HEK293 (cell line): ENCODE measurements at regions of chr16 and their contacts with region 1.

Region 1: DNA sequence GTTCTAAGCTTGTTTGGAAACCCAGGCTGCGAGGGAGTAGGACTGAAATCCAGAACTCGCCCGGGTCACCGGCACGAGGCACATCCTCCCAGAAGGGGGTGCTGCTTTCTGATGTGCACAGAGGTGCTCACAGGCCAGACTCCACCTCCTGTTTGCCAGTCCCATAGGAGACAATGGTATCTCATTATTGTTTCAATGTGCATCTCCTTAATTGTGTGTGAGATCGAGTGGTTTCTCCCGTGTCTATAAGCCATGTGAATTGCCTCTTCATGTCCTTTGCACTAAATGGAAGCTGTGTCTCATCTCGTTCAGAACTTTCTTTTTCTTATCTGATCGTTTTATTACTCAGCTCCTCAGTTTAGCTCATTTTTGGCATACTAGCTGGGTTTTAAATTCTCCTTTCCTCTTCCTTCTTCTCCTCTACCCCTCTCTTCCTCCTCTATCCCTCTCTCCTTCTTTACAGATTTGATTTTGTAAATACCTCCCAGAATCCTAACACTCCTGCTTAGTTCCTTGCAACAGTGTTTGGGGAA is 32.1 kb upstream of the PRKCB start:
- H3K4me3 ChIP-seq: no peak overlapping the region
- H3K27ac ChIP-seq: no peak overlapping the region
- H3K4me1 ChIP-seq: no peaks in the 10 kb centered on the region
- CTCF ChIP-seq: peak; percentile 76

Region 2: GRCh38 chr16:23784811-23785447 is 18.7 kb before region 1 on chr16:
- CTCF ChIA-PET with region 1: interaction called, 17 read pairs
- POLR2A ChIA-PET with region 1: no interaction called
- H3K4me3 ChIP-seq: no peak overlapping the region
- H3K27ac ChIP-seq: no peak overlapping the region
- H3K4me1 ChIP-seq: peaks cover 3% of the 10 kb centered on the region; the same call in 1 of the 2 replicates
- CTCF ChIP-seq: no peak

Region 3: GRCh38 chr16:24015923-24016322 is 212.3 kb after region 1 on chr16:
- CTCF ChIA-PET with region 1: interaction called, 31 read pairs
- POLR2A ChIA-PET with region 1: no interaction called
- H3K4me3 ChIP-seq: no peak overlapping the region
- H3K27ac ChIP-seq: no peak overlapping the region
- H3K4me1 ChIP-seq: peaks cover 12% of the 10 kb centered on the region
- CTCF ChIP-seq: no peak